Adrenal gland (tissue), 19 donors: ENCODE measurements at regions of chr20 and their contacts with region 1.

Region 1: DNA sequence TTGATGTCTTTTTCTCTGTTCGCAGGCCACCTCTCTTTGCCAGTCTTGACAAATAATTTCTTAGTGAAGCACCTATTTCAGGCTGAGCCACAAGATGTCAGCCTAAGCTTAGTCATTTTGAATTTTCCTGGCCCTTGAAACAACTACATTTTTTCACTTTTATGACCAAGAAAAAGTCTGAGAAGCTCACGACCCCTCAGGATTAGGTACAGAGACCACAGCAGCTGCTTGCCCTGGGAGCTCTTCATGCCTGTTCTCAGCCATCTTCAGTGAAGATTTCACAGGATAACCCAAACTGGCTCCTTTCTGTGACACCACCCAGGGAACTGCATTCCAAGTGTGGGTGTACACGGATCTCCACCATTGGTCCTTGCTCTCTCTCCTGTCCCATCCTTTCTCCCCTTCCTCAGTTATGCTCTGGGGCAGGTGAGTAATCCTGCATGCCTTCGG is 38.4 kb upstream of the SPTLC3 start:
- DNase-seq: peak in 4 of 7 donors; percentile 15 to 45 (median 26)
- H3K4me3 ChIP-seq: no peak overlapping the region
- H3K27ac ChIP-seq: no peak overlapping the region
- H3K4me1 ChIP-seq: no peaks in the 10 kb centered on the region
- H3K27me3 ChIP-seq: no peaks in the 10 kb centered on the region
- CTCF ChIP-seq: peak; percentile 41 to 78 (median 70)
- POLR2A ChIP-seq: no peak

Region 2: DNA sequence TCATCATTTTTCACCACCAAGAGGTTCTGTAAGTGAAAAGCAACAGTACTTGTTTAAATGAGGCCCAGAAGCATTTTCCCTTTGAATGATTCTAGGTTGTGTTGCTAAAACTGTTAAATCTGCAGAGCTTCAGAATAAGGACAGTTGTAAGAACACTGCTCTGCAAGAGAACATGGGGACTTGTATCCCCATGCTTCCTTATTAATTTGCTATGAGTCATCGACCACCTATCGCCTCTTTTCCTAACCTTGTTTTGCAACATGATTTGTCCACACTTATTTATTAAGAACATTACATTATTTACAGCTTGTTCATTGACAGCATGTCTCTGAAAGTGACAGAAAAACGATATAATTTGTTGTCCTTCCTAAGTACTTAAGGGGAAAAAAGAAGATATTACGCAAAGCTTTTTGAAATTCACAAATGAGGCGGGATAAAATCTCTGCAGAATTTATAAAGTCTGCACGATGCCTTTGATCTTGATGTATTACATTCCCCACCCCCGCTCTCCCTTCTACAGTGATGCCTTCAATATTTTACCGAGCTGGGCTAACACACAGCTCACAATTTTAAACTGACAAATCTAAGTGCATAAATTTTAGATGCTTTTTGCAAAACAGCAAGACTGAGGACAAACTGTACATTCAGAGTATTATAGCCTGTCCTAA is 181.6 kb before region 1 on chr20:
- intact Hi-C with region 1: no loop called
- DNase-seq: no peak
- H3K4me3 ChIP-seq: no peak overlapping the region
- H3K27ac ChIP-seq: no peak overlapping the region
- H3K4me1 ChIP-seq: no peaks in the 10 kb centered on the region
- H3K27me3 ChIP-seq: no peaks in the 10 kb centered on the region
- CTCF ChIP-seq: no peak
- POLR2A ChIP-seq: no peak

Region 3: GRCh38 chr20:13092111-13092510 is 121.7 kb after region 1 on chr20:
- intact Hi-C with region 1: no loop called
- DNase-seq: no peak
- H3K4me3 ChIP-seq: no peak overlapping the region
- H3K27ac ChIP-seq: no peak overlapping the region
- H3K4me1 ChIP-seq: no peaks in the 10 kb centered on the region
- H3K27me3 ChIP-seq: no peaks in the 10 kb centered on the region
- CTCF ChIP-seq: no peak
- POLR2A ChIP-seq: no peak

Region 4: DNA sequence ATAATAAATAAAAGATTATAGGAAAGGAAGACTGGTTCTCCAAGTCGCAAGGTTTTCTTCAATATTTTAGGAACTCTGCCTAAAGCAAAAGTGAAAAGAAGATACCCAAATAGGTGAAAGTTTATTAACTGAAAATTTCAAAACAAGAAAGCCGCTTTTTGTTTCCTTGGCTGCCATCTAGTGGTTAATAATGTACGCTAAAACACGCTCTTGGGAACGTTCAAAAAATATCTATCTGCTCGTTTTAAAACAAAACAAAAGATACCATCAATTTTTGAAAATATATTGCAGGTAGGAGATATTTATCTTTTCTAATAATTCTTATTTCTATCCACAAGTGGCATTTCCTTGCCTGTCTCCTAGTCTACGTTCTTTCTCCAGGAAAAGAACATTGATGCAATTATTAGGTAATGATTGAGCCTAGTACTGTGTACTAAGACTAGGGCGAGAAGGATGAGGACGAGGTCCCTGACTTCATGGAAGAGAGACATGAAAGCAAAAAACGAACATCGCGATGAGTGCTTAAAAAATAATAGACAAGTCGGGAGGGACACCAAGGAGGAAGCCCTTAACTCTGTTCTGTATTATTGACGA is 135.6 kb after region 1 on chr20:
- intact Hi-C with region 1: loop called (anchors 2 to 10 kb)
- DNase-seq: peak in 1 of 7 donors; percentile 7
- H3K4me3 ChIP-seq: no peak overlapping the region
- H3K27ac ChIP-seq: no peak overlapping the region
- H3K4me1 ChIP-seq: peaks cover 0 to 6% of the 10 kb centered on the region in 2 donors
- H3K27me3 ChIP-seq: no peaks in the 10 kb centered on the region
- CTCF ChIP-seq: peak; percentile 51 to 82 (median 64)
- POLR2A ChIP-seq: no peak